Left colon (tissue), 2 donors: ENCODE measurements at regions of chr1 and their contacts with region 1.

Region 1: GRCh38 chr1:51192213-51192843 is 43.7 kb upstream of the RNF11 start:
- DNase-seq: peak; percentile 44 to 72
- ATAC-seq: peak; percentile 70

Region 2: DNA sequence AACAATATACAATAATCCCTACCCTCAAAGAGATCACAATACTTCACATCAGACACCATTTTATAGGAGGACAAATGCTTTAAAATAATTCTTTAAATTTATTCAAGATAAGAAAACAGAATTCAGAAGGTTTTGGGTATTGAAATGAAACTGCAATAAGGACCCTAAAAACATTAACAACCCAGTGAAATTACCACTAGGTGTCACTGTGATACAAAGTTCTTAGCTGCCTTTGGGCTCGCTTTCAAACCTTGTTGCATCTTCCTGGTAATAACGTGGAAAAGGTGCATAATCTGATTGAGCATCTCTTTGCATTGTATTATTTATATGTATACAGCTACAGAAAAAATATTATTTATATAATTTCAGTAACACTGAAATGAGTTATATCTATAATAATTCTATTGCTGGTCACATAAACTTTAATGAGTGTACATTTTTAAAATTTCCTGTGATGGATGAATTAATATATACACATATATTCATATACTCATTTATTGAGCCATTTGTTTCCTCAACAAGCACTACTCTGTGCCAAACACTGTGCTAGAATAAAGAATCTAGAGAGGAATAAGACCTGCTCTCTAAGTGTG is 417.5 kb before region 1 on chr1:
- intact Hi-C with region 1: loop called in 1 of 2 experiments (anchors 5 kb)
- DNase-seq: no peak
- ATAC-seq: peak; percentile 82

Region 3: DNA sequence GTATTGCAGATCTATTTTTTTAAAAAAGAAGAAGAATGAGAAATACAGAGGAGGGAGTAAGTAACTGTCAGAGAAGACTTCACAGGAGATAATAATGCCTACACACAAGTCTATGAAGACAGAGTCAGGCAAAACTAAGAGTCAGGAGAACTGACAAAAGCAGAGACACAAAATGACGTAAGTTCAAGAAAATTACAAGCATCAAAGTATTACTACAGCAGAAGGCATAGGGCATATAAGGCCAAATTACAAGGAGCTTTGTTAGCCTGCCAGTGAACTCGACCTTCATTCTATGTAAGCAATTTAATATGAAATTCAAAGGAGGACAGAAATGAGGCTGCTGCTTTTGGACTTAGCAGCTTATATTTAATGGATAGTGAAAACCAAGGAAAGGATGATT is 256.0 kb before region 1 on chr1:
- intact Hi-C with region 1: loop called in 1 of 2 experiments (anchors 5 kb)
- DNase-seq: no peak
- ATAC-seq: no peak

Region 4: DNA sequence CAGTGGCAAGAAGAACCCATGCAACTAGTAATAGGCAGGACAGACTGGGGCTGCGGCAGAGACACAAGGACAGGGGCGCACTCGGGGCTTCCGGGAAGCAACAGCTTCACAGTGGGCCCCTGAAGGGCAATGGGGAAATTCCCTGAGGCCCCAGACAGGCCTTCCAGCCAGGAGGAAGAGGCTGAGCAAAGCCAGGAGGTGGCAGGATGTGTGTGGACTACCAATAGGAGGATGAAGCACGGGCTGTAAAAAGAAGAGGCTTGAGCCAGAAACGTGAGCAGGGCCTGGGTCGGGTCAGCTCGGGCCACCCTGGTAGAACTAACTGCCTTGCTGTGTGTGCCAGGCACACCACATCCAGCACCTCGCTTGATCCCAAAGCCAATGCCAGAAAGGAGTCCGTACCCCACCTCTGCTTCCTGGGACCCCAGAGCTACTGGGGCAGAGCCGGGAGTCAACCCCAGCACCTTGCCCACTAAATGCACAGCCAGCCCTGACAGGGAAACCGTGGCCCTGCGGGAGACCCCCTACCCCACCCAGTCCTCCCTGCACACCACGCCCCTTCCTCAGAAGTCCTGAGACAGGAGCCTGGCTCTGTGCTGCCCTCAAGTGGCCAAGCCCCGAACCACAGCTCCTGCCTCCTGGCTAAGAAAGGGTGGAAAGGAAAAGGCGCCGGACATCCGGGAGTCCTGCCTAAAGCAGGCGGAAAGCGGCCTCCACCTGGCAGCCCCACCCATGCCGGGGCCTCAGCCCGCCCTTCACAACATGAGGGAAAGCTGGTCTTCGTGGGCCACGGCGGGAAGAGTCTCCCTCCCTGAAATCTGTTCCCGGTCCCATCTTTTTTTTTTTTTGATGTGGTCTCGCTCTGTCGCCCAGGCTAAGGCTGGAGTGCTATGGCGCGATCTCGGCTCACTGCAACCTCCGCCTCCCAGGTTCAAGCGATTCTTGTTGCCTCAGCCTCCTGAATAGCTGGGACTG is 104.3 kb after region 1 on chr1:
- intact Hi-C with region 1: loop called in 1 of 2 experiments (anchors 10 kb)
- DNase-seq: peak; percentile 85 to 88
- ATAC-seq: peak; percentile 89